AG04449 (cell line): ENCODE measurements at regions of chr4 and their contacts with region 1.

Region 1: GRCh38 chr4:183602557-183603027 is 56.4 kb downstream of the RWDD4 start:
- DNase-seq: no peak
- H3K4me3 ChIP-seq: no peak overlapping the region
- CTCF ChIP-seq: peak; percentile 27

Region 2: DNA sequence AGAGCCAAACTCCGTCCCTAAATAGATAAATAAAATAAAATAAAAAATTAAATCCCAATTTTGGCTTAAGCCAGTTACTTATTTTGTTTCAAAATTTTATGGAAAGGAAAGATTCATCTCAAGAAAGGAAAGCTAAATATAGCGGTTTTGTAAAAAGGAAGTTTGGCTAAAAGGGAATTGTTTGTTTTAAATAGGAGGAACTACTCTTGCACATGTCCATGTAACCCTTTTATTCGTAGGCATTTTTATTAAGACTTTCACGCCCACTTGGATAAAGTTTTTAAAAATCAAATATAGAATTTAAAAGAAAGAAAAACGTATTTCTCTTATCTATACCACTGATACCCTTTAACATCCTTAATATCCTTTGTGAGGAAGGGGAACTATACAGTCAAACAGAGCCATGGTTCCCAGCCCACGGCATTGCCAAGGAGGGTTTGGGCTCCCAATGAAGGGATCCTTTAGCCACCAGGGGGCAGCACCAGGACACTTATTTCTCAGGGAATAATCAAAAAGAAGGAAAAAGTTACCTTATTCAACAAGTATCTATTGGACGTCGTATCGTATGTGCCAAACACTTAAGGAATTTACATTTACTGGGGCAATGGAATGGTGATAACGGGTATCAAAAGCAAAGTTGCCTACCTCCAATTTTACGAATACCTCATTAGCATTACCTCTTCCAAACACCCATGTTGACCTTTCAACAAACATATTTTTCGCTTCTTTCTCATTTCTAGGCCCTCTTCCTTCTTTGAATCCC is 130.5 kb before region 1 on chr4:
- CTCF ChIA-PET with region 1: interaction called, 54 read pairs
- POLR2A ChIA-PET with region 1: no interaction called
- DNase-seq: no peak
- H3K4me3 ChIP-seq: no peak overlapping the region
- CTCF ChIP-seq: peak; percentile 70

Region 3: DNA sequence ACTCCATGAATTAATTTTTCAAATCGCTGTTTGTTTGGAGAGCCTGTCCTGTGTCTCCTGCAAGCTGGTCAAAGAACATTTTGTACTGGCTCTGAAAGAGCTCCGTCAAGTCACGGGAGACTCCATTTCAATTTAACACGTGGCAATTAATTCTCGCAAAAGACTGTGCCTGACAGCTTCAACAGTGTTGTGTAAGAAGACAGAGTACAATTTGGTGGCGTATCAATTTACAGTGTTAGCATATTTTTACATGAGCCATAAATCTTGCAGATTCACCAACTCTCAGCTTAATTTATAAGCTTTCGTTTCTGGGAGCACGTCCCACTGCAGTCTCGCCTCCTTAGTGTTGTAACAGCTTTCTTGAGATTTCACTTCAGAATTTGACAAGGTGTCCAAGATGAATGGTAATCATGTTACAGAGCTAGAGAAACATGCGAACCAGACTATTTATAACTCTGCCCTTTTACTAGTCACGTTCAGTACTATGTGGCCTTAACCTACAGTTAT is 14.4 kb before region 1 on chr4:
- CTCF ChIA-PET with region 1: interaction called, 11 read pairs
- POLR2A ChIA-PET with region 1: no interaction called
- DNase-seq: no peak
- H3K4me3 ChIP-seq: no peak overlapping the region
- CTCF ChIP-seq: no peak

Region 4: DNA sequence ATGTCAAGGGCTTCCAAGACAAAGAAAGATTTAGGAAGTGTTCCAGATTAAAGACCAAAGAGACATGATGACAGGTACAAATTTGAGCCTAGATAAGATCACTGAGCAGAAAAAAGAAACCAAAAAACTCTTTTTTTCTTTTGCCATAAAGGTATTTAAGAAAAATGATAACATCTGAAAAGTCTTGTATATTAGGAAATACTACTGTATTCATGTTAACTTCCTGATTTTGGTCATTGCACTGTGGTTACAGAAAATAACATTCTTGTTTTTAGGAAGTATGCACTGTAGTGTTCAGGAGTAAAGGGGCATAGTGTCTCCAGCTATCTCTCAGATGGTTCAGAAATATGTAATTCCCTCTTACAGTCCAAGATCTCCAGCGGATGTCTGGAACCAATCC is 19.3 kb after region 1 on chr4:
- CTCF ChIA-PET with region 1: no interaction called
- POLR2A ChIA-PET with region 1: no interaction called
- DNase-seq: no peak
- H3K4me3 ChIP-seq: no peak overlapping the region
- CTCF ChIP-seq: no peak

Region 5: GRCh38 chr4:183738081-183738673 is 135.6 kb after region 1 on chr4:
- CTCF ChIA-PET with region 1: no interaction called
- POLR2A ChIA-PET with region 1: no interaction called
- DNase-seq: no peak
- H3K4me3 ChIP-seq: no peak overlapping the region
- CTCF ChIP-seq: no peak

Region 6: DNA sequence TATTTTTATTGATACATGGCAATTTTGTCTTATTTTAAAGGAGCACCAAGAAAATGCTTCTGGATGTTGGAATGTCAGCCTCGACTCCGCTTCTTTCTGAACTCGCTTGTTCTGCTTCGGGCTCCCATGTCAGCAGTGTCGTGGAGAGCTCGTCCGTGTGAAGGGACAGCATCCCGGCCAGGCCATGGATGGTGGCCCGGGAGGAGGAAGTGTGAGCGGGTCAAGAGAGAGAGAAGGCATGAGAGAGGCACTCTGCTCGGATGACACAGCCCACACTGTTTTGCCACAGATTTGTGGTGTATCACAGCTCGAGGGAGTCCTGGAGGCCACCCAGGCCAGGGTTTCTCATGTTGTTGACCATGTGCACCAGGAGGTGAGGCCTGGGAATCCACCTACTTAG is 163.5 kb after region 1 on chr4:
- CTCF ChIA-PET with region 1: no interaction called
- POLR2A ChIA-PET with region 1: no interaction called
- DNase-seq: no peak
- H3K4me3 ChIP-seq: no peak overlapping the region
- CTCF ChIP-seq: no peak

Region 7: GRCh38 chr4:183783991-183784553 is 181.5 kb after region 1 on chr4:
- CTCF ChIA-PET with region 1: no interaction called
- POLR2A ChIA-PET with region 1: no interaction called
- DNase-seq: no peak
- H3K4me3 ChIP-seq: no peak overlapping the region
- CTCF ChIP-seq: no peak